ENCODE measurements at regions of chr15 and their contacts with region 1.

Region 1: DNA sequence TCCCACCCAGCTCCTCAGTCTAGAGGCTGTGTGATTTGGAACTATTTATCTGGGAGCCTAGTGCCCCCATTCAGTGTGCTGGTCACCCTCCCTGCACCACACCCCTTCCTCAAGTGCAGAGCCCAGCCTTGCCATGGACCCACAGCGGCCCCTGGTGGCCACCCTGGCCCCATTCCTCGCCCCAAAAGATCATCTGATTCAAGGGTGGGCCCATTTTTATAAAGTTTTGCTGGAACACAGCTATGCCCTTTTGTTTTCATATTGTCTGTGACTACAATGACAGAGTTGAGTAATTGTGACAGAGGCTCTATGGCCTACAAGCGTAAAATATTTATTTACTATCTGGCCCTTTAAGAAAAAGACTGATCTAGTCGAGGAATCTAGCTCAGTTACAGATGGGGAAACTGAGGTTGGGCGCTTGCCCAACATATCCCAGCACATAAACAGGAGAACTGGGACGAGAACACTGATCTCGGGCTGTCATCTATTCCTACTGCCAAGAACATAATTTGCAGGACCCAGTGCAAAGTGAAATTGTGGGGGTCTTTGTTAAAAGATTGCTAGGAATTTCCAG is 1.8 kb downstream of the FES start:
- DNase-seq: peak; percentile 73 to 88 (median 86)
- H3K4me3 ChIP-seq: no peak overlapping the region
- H3K27ac ChIP-seq: peak overlapping the region in 1 of 2 donors; percentile 97
- H3K4me1 ChIP-seq: peaks cover 10% of the 10 kb centered on the region
- H3K27me3 ChIP-seq: no peaks in the 10 kb centered on the region
- CTCF ChIP-seq: peak; percentile 89 to 94 (median 91)
- EP300 ChIP-seq: no peak
- POLR2A ChIP-seq: no peak

Region 2: GRCh38 chr15:90320061-90320884 is 565.9 kb before region 1 on chr15:
- intact Hi-C with region 1: loop called in 1 of 4 experiments (anchors 5 kb)
- DNase-seq: peak; percentile 81 to 84 (median 83)
- H3K4me3 ChIP-seq: no peak overlapping the region
- H3K27ac ChIP-seq: no peak overlapping the region
- H3K4me1 ChIP-seq: peaks cover 5% of the 10 kb centered on the region
- H3K27me3 ChIP-seq: no peaks in the 10 kb centered on the region
- CTCF ChIP-seq: peak; percentile 94 to 99 (median 97)
- EP300 ChIP-seq: no peak
- POLR2A ChIP-seq: no peak

Region 3: DNA sequence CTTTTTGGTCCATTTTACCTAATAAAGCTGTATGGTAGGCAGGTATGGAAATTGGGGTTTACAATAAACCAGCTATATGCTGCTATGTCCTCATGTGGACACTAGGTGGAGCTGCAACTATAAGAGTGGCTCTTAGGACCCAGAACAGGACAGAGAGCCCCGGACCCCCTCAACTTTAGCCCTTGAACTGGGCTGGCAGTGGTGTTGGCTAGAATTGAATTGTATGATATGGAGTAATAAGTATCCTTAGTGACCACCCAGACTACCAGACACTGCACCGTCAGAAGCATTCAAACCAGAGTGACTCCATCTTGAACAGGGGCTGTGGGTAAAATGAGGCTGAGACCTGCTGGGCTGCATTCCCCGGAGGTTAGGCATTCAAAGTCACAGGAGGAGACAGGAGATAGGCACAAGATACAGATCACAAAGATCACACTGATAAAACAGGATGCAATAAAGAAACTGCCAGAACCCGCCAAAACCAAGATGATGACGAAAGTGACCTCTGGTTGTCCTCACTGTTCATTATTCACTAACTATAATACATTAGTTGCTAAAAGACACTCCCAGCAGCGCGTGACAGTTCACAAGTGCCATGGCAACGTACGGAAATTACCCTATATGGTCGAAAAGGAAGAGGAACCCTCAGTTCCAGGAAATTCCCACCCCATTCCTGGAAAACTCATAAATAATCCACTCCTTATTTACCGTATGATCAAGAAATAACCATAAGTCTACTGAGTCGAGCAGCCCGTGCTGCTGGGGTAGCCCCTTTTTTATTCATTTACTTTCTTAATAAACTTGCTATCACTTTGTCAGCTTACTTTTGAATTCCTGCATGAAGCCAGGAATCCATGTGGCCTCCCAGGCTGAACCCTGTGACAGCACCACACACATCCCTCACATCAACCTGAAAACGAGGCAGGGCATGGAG is 237.7 kb before region 1 on chr15:
- intact Hi-C with region 1: loop called (anchors 2 to 5 kb)
- DNase-seq: peak in 3 of 5 donors; percentile 45 to 82 (median 64)
- H3K4me3 ChIP-seq: no peak overlapping the region
- H3K27ac ChIP-seq: peak overlapping the region in 1 of 2 donors; percentile 38
- H3K4me1 ChIP-seq: no peaks in the 10 kb centered on the region
- H3K27me3 ChIP-seq: no peaks in the 10 kb centered on the region
- CTCF ChIP-seq: peak; percentile 85 to 90 (median 88)
- EP300 ChIP-seq: peak; percentile 86
- POLR2A ChIP-seq: no peak

Region 4: GRCh38 chr15:90716976-90717821 is 168.9 kb before region 1 on chr15 and contains the start of gene BLM:
- intact Hi-C with region 1: loop called in 1 of 4 experiments (anchors 5 kb)
- DNase-seq: peak; percentile 94 to 97 (median 96)
- H3K4me3 ChIP-seq: peak within 1 kb of the TSS; percentile 70
- H3K27ac ChIP-seq: peak within 1 kb of the TSS; percentile 14 to 81
- H3K4me1 ChIP-seq: peaks cover 3% of the 10 kb centered on the region
- H3K27me3 ChIP-seq: no peaks in the 10 kb centered on the region
- CTCF ChIP-seq: peak; percentile 34 to 73 (median 52)
- EP300 ChIP-seq: no peak
- POLR2A ChIP-seq: no peak
- total RNA-seq, gene BLM: 0.15 to 1.9 (median 0.78) TPM in 6 of 7 donors, not detected in the other

Measured in ovary (tissue), 10 donors.